GM12878 (cell line): ENCODE measurements at regions of chr6 and their contacts with region 1.

Region 1: GRCh38 chr6:53410508-53411258 is 61.9 kb upstream of the ELOVL5 start:
- DNase-seq: peak; percentile 37
- ATAC-seq: peak; percentile 100
- H3K4me3 ChIP-seq: no peak overlapping the region
- H3K27ac ChIP-seq: no peak overlapping the region
- H3K4me1 ChIP-seq: peaks cover 4% of the 10 kb centered on the region; the same call in 1 of the 2 replicates
- H3K27me3 ChIP-seq: no peaks in the 10 kb centered on the region
- CTCF ChIP-seq: peak; percentile 85 to 92 (median 86)
- EP300 ChIP-seq: 0 out of 4 replicates have a peak, but pooled peaks of 1 of the 2 experiments have one; percentile 14
- POLR2A ChIP-seq: no peak
- RAD21 ChIP-seq: peak; percentile 86

Region 2: GRCh38 chr6:53284901-53285300 is 125.8 kb before region 1 on chr6:
- CTCF ChIA-PET with region 1: interaction called, 16 read pairs
- POLR2A ChIA-PET with region 1: interaction called, 4 read pairs
- RAD21 ChIA-PET with region 1: interaction called, 8 read pairs
- SMC1A ChIA-PET with region 1: interaction called, 21 read pairs
- in situ Hi-C with region 1: no loop called
- intact Hi-C with region 1: loop called (anchors 5 kb)
- DNase-seq: no peak
- ATAC-seq: peak; percentile 76
- H3K4me3 ChIP-seq: no peak overlapping the region
- H3K27ac ChIP-seq: no peak overlapping the region
- H3K4me1 ChIP-seq: peaks cover 28% of the 10 kb centered on the region
- H3K27me3 ChIP-seq: no peaks in the 10 kb centered on the region
- CTCF ChIP-seq: no peak
- EP300 ChIP-seq: peak in 1 of 2 experiments; percentile 33; a peak in 1 of 4 replicates
- POLR2A ChIP-seq: no peak
- RAD21 ChIP-seq: no peak

Region 3: DNA sequence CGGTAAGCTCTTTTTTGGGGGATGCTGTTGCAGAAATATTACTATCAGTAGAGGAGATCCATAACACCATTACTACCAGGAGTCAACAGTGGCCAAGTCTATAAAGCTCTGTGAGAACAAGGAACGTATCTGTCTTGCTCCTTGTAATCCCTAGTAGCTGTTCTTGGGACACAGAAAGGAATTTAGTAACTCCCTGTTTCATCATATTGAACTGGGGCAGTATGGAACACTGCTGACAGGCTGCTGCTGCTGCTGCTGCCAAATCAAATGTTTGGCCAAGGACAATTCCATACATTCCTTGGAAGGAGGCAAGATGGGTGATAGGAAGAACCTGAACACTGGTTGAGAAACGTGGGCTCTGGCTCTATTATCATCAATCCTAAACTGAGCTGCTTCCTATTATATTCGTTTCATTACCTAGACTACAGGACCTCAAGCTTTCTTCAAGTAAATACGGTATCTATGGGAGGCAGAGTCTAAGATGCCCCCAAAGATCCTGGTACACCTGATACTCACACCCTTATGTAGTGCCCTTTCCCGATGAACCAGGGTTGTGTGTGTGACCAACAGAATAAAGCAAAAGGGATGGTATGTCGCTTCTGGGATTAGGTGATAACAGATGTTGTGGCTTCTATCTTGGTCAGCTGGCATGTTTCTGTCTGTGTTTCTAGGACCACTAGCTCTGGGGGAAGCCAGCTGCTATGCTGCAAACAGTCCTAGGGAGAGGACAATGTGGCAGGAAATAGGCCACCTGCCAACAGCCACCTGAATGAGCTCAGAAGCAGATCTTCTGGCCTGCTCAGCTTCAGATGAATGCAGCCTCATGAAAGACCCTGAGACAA is 101.4 kb before region 1 on chr6:
- CTCF ChIA-PET with region 1: interaction called, 17 read pairs
- POLR2A ChIA-PET with region 1: no interaction called
- RAD21 ChIA-PET with region 1: interaction called, 3 read pairs
- SMC1A ChIA-PET with region 1: interaction called, 23 read pairs
- in situ Hi-C with region 1: no loop called
- intact Hi-C with region 1: no loop called
- DNase-seq: peak; percentile 42
- ATAC-seq: peak; percentile 58
- H3K4me3 ChIP-seq: no peak overlapping the region
- H3K27ac ChIP-seq: peak overlapping the region; percentile 10
- H3K4me1 ChIP-seq: peaks cover 39% of the 10 kb centered on the region
- H3K27me3 ChIP-seq: no peaks in the 10 kb centered on the region
- CTCF ChIP-seq: no peak
- EP300 ChIP-seq: peak in 1 of 2 experiments; percentile 19; a peak in 1 of 4 replicates
- POLR2A ChIP-seq: peak; percentile 28; the same call in 1 of the 2 replicates
- RAD21 ChIP-seq: no peak

Region 4: GRCh38 chr6:53348371-53349208 is 62.1 kb before region 1 on chr6 and contains the start of gene ELOVL5:
- CTCF ChIA-PET with region 1: interaction called, 10 read pairs
- POLR2A ChIA-PET with region 1: interaction called, 4 read pairs
- RAD21 ChIA-PET with region 1: interaction called, 7 read pairs
- SMC1A ChIA-PET with region 1: interaction called, 21 read pairs
- in situ Hi-C with region 1: no loop called
- intact Hi-C with region 1: loop called (anchors 1 kb)
- DNase-seq: peak; percentile 73
- ATAC-seq: peak; percentile 80
- H3K4me3 ChIP-seq: peak within 1 kb of the TSS; percentile 92
- H3K27ac ChIP-seq: peak within 1 kb of the TSS; percentile 85
- H3K4me1 ChIP-seq: peaks cover 11% of the 10 kb centered on the region
- H3K27me3 ChIP-seq: no peaks in the 10 kb centered on the region; a peak in 1 of 4 replicates
- CTCF ChIP-seq: no peak
- EP300 ChIP-seq: no peak
- POLR2A ChIP-seq: peak; percentile 81
- RAD21 ChIP-seq: no peak
- polyA plus RNA-seq, gene ELOVL5: 187 to 195 TPM

Region 5: DNA sequence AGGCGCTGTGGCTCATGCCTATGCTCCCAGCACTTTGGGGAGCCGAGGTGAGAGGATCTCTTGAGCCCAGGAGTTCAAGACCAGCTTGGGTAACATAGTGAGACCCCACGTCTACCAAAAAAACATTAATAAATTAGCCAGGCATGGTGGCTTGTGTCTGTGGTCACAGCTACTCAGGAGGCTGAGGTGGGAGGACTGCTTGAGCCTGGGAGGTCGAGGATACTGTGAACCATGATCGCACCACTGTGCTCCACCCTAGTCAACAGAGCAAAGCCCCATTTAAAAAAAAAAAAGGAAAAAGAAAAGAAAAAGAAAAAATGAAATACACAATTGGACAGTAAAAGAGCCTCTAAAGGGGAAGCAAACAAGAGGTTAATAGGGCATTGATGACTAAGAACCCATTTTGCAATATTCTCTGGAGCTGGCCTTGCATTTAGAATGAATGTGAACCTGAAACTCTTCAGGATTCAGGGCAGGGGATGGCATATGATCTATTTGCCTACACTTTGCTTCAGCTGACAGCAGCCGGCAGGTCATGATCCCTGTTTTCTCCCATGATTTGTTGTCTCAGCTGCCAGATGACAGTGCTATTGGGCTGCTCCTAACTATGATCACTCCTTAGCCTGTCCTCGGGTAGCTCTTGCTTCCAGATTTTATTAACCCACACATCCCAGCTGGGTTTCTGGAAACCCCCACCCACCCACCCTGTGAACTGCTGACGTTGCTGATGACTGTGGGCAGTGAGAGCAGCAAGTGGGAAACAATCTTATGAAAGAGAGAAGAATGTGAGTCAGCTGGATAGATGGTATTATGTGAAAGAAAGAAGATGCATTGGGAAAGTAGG is 21.9 kb after region 1 on chr6:
- CTCF ChIA-PET with region 1: interaction called, 62 read pairs
- POLR2A ChIA-PET with region 1: interaction called, 6 read pairs
- RAD21 ChIA-PET with region 1: interaction called, 52 read pairs
- SMC1A ChIA-PET with region 1: interaction called, 76 read pairs
- in situ Hi-C with region 1: no loop called
- intact Hi-C with region 1: loop called (anchors 1 kb)
- DNase-seq: no peak
- ATAC-seq: peak; percentile 44
- H3K4me3 ChIP-seq: no peak overlapping the region
- H3K27ac ChIP-seq: no peak overlapping the region
- H3K4me1 ChIP-seq: no peaks in the 10 kb centered on the region
- H3K27me3 ChIP-seq: no peaks in the 10 kb centered on the region
- CTCF ChIP-seq: no peak
- EP300 ChIP-seq: no peak
- POLR2A ChIP-seq: no peak
- RAD21 ChIP-seq: no peak

Region 6: DNA sequence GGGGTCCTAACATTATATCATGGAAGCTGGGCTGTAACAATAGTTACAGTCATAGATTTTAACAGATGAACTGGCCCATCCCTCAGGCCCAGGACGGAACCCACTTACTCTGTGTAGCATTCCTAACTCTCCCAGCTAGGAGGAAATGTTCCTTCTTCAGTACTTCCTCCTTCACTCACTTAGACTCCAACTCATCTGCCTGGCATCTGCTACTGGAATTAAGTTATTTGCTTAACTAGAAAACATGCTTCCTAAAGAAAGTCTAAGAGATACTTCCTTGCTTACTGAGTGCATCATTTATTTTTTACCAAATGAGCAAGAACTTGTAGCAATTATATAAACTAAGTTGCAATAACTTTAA is 113.8 kb after region 1 on chr6:
- CTCF ChIA-PET with region 1: no interaction called
- POLR2A ChIA-PET with region 1: no interaction called
- RAD21 ChIA-PET with region 1: no interaction called
- SMC1A ChIA-PET with region 1: no interaction called
- in situ Hi-C with region 1: no loop called
- intact Hi-C with region 1: no loop called
- DNase-seq: no peak
- ATAC-seq: no peak
- H3K4me3 ChIP-seq: no peak overlapping the region
- H3K27ac ChIP-seq: no peak overlapping the region
- H3K4me1 ChIP-seq: no peaks in the 10 kb centered on the region
- H3K27me3 ChIP-seq: no peaks in the 10 kb centered on the region
- CTCF ChIP-seq: no peak
- EP300 ChIP-seq: no peak
- POLR2A ChIP-seq: no peak
- RAD21 ChIP-seq: no peak

Region 7: GRCh38 chr6:54043360-54043759 is 632.7 kb after region 1 on chr6:
- CTCF ChIA-PET with region 1: no interaction called
- POLR2A ChIA-PET with region 1: no interaction called
- RAD21 ChIA-PET with region 1: no interaction called
- SMC1A ChIA-PET with region 1: no interaction called
- in situ Hi-C with region 1: no loop called
- intact Hi-C with region 1: no loop called
- DNase-seq: no peak
- ATAC-seq: no peak
- H3K4me3 ChIP-seq: no peak overlapping the region
- H3K27ac ChIP-seq: no peak overlapping the region
- H3K4me1 ChIP-seq: no peaks in the 10 kb centered on the region
- H3K27me3 ChIP-seq: no peaks in the 10 kb centered on the region
- CTCF ChIP-seq: no peak
- EP300 ChIP-seq: no peak
- POLR2A ChIP-seq: no peak
- RAD21 ChIP-seq: no peak